Dendritic cell treated with granulocyte-macrophage colony-stimulating factor and Interleukin-4, amounts not matched to agents 40 ng/mL and 50 ng/mL, for 4 days (primary cell): ENCODE measurements at regions of chr5 and their contacts with region 1.

Region 1: DNA sequence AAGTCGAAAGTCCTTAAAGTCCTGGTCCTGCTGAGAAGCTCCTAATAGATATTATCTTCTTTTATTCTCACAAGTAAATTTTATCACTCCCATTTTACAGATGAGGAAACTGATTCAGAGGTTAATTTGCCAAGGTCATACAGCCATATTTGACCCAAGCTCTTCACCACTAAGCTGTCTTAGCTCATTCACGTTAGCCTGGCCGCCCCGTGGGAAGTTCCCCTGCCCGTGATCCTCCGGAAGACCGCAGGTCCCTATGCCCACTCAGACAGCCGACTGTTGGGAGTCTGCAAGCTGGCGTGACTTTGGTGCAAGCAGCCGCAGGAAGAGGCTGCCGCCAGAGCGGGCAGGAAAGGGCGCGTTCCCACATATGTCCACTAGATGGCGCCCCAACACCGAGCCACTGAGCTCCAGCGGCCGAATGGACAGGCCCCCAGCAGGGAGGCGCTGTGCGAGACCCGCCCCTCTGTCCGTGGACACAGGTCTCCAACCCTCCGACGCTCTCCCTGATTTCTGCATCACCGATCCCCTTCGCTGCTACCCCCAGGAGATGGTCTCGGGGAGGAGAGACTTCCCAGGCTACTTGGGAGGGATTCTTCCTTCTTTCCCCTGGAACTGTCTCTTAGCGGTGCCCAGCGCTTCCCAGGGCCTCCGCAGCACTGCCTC is 10.0 kb upstream of the ARAP3 start:
- H3K4me3 Mint-ChIP-seq: peak overlapping the region; percentile 57
- H3K27ac Mint-ChIP-seq: peak overlapping the region; percentile 50
- H3K4me1 Mint-ChIP-seq: peaks cover 34% of the 10 kb centered on the region
- H3K27me3 Mint-ChIP-seq: peaks cover 36% of the 10 kb centered on the region

Region 2: DNA sequence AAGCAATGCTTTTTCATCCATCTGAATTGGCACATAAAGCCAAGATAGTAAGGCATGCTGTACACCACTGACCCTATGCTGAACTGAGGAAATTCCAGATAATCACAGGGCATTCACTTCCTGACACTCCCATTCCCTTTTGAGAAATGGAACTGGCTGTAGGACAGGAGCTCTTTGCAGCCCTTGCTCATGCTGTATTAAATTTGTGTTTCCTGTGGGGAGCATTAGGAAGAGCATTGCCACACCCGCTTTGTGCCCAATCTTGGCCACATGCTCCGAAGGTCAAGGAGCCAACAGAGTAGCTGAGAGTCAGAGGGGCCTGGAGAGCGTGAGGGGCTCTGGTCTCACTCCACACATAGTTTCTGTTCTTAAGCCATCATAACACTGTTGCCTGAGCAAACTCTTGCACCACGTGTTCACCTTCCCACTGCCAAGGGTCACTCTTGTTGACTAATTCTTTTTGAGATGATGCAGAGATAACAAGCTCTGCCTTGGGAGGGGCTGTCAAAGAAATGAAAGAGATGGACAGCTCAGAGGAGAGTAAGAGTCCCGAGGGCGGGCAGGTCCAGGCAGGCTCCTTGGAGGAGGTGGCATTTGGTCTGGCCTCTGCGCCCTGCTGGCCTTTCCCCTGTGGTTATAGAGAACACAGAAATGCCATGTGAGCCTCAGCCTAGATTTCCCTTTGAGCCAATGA is 21.8 kb after region 1 on chr5:
- intact Hi-C with region 1: no loop called
- H3K4me3 Mint-ChIP-seq: no peak overlapping the region
- H3K27ac Mint-ChIP-seq: no peak overlapping the region
- H3K4me1 Mint-ChIP-seq: no peaks in the 10 kb centered on the region
- H3K27me3 Mint-ChIP-seq: peaks cover 27% of the 10 kb centered on the region

Region 3: DNA sequence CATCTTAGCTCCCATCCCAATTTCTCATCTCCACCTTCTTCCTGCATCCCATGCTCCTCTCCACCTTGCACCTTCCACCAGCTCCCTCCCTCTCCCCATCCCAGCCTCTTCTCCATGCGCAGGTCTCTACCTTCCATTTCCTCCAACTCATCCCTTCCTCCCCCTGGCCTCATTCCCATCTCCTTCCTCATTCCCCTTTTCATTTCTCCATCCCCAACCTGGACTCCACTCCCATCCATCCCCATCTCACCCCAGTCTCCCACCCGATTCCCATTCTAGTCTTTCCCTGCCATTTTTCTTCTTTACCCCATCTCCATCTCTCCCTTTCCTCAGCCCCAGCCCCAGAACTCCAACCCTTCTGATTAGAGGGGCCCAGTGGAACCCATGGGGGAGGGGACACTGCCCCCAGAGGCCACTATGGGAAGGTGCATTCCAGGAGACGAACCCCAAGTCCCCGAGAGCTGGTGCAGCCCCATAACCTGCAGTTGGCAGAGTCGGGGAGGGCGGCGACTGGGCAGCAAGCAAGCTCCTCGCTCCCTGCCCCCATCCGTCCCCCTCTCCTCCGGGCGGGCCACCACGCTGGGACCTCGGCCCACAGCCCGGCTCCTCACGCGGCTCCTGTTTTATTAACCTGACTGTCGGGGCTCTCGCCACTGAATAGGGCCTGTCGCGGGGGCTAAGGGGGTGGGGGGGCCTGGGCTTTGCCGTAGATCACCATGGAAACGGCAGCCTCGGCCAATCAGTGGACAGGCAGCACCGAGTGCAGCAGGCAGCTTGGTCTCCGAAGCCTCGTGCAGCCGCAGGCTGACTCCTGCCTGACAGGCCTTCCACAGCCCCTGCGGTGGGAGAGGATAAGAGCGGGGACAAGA is 119.5 kb after region 1 on chr5:
- intact Hi-C with region 1: loop called (anchors 10 kb)
- H3K4me3 Mint-ChIP-seq: no peak overlapping the region
- H3K27ac Mint-ChIP-seq: no peak overlapping the region
- H3K4me1 Mint-ChIP-seq: peaks cover 6% of the 10 kb centered on the region
- H3K27me3 Mint-ChIP-seq: peaks cover 48% of the 10 kb centered on the region

Region 4: DNA sequence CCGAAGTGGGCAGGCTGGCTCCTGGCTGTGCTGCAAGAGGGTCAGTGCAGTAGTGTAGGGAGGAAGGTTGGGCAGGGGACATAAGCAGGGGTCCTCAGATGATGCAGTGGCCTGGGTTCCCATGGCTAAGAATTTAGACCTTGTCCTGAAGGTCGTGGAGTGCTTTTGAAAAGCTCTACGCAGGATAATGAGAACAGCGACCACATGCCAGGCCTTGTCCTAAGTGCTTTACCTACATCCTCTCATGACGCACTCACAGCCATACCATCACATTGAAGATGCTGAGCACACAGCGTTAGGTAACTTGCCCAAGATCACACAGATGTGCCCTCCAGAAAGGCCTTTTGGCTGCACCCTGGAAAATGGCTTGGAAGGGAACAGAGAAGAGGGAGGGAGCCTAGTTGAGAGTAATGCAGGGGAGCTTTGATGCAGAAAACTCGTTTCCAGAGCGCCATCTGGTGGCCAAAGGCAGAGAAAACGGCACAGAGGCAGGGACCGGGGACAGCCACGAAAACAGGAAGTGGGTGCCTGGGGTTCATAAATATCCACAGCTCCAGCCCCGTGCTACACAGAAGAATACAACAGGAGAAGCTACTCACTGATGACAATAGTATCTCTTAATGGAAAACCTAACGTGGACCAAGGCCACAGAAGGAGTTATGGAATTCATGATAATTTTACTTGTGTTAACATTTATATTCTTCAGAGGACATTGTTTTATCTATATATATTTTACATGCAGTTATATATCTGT is 268.6 kb after region 1 on chr5:
- intact Hi-C with region 1: loop called (anchors 2 kb)
- H3K4me3 Mint-ChIP-seq: no peak overlapping the region
- H3K27ac Mint-ChIP-seq: no peak overlapping the region
- H3K4me1 Mint-ChIP-seq: peaks cover 41% of the 10 kb centered on the region
- H3K27me3 Mint-ChIP-seq: peaks cover 6% of the 10 kb centered on the region